Mammary epithelial cell (primary cell): ENCODE measurements at regions of chr13 and their contacts with region 1.

Region 1: DNA sequence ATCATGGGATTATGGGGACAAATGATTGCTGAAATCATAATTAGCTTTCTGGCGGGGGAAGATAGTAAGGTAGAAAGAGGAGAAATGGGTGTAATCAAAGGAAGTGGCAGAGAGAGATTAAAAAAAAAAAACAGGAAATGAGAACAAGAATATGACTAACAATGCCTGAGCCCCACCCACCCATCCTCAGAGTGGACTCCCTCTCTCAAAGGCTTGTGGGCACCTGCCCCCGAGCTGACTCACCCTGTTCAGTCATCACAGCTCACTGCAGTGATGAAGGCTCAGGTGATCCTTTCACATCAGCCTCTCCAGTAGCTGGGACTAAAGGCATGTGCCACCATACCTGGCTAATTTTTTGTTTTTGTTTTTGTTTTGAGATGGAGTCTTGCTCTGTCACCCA is 26.4 kb upstream of the TPT1 start:
- DNase-seq: peak; percentile 99
- H3K4me3 ChIP-seq: no peak overlapping the region
- H3K27ac ChIP-seq: peak overlapping the region; percentile 92
- H3K4me1 ChIP-seq: peaks cover 39% of the 10 kb centered on the region
- H3K27me3 ChIP-seq: no peaks in the 10 kb centered on the region
- CTCF ChIP-seq: no peak

Region 2: DNA sequence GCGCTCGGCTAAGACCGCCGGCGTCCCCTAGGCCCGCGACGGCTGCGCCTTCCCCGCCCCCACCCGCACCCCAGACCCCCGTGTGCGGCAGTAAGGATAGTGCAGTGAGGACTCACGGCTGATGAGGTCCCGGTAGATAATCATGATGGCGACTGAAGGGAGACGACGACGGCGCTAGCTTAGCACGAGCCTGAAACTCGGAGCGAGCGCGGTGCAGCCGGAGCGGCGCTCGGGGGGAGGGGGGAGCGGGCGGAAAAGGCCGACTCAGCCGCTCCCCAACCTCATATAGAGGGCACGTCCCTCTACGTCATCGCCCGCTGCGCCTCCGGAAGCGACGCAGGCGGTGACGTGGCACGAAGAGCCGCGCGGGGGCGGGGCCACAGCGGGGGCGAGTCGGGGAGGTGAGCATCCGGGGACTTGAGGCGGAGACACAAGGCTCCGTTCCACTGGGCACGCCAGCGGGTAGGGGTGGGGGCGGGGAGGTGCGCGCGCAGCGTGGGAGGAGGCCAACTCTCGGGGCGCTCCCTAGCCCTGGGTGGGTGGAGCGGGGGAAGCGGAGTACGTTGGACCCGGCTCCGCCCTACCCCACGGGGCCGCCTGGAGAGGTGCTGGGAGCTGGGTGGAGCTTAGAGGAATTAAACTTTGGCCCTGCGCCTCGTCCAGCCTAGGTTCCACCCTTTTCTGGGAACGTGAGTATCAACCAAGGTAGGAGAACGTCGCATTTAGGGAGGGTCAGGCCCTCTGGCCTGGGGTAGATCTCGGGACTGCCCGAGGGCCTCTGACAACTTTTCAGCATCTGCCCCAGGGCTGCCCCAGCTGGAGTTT is 26.2 kb before region 1 on chr13 and contains the start of gene TPT1:
- CTCF ChIA-PET with region 1: no interaction called
- dilution Hi-C with region 1: no loop called
- in situ Hi-C with region 1: no loop called
- intact Hi-C with region 1: loop called (anchors 1 kb)
- DNase-seq: peak; percentile 99
- H3K4me3 ChIP-seq: peak within 1 kb of the TSS; percentile 77 to 96 (median 88)
- H3K27ac ChIP-seq: peak within 1 kb of the TSS; percentile 94
- H3K4me1 ChIP-seq: peaks cover 39% of the 10 kb centered on the region
- H3K27me3 ChIP-seq: no peaks in the 10 kb centered on the region
- CTCF ChIP-seq: no peak
- total RNA-seq, gene TPT1: 1,890 to 3,324 TPM

Region 3: DNA sequence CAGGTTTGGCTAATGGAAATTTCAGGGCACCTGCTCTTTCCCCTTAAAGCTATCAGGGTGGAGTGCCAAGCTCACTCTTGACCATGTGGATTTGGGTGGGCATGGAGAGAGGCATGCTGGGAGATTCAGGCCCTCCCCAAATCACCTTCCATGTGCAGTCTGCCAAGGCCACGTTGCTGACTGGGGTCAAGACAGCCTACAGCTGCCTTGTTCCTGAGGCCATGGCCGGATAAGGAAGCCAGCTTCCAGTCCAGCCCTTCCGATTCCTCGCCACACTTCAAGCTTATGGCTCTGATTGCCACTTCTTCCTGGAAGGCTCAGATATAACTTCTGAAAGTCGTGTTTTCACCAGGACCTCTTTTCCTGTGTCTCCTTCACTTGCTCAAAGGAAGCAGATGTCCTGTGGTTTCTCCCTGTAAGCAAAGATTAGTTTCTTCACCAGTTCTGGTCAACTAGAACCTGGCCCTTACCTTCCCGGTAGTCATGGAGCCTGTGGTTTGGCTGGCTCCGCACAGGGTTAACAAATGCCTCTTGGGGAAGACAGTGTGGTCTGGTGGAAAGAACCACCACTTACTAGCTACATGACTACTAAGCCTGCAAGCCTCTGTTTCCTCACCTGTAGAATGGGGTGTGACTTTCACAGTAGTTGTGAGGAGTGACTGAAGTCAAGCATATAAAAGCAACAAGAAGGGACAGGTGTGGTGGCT is 10.2 kb before region 1 on chr13:
- CTCF ChIA-PET with region 1: no interaction called
- dilution Hi-C with region 1: no loop called
- in situ Hi-C with region 1: no loop called
- intact Hi-C with region 1: loop called (anchors 1 kb)
- DNase-seq: no peak
- H3K4me3 ChIP-seq: no peak overlapping the region
- H3K27ac ChIP-seq: no peak overlapping the region
- H3K4me1 ChIP-seq: peaks cover 8% of the 10 kb centered on the region
- H3K27me3 ChIP-seq: no peaks in the 10 kb centered on the region
- CTCF ChIP-seq: no peak

Region 4: GRCh38 chr13:45490068-45490467 is 122.7 kb after region 1 on chr13:
- CTCF ChIA-PET with region 1: no interaction called
- dilution Hi-C with region 1: no loop called
- in situ Hi-C with region 1: loop called in 1 of 2 experiments (anchors 25 kb)
- intact Hi-C with region 1: loop called (anchors 2 kb)
- DNase-seq: no peak
- H3K4me3 ChIP-seq: no peak overlapping the region
- H3K27ac ChIP-seq: no peak overlapping the region
- H3K4me1 ChIP-seq: no peaks in the 10 kb centered on the region
- H3K27me3 ChIP-seq: no peaks in the 10 kb centered on the region
- CTCF ChIP-seq: peak; percentile 41 to 50

Region 5: GRCh38 chr13:45584816-45585215 is 217.5 kb after region 1 on chr13:
- CTCF ChIA-PET with region 1: no interaction called
- dilution Hi-C with region 1: no loop called
- in situ Hi-C with region 1: no loop called
- intact Hi-C with region 1: loop called (anchors 1 kb)
- DNase-seq: peak; percentile 15
- H3K4me3 ChIP-seq: no peak overlapping the region
- H3K27ac ChIP-seq: no peak overlapping the region
- H3K4me1 ChIP-seq: no peaks in the 10 kb centered on the region
- H3K27me3 ChIP-seq: no peaks in the 10 kb centered on the region
- CTCF ChIP-seq: peak; percentile 47 to 60

Region 6: DNA sequence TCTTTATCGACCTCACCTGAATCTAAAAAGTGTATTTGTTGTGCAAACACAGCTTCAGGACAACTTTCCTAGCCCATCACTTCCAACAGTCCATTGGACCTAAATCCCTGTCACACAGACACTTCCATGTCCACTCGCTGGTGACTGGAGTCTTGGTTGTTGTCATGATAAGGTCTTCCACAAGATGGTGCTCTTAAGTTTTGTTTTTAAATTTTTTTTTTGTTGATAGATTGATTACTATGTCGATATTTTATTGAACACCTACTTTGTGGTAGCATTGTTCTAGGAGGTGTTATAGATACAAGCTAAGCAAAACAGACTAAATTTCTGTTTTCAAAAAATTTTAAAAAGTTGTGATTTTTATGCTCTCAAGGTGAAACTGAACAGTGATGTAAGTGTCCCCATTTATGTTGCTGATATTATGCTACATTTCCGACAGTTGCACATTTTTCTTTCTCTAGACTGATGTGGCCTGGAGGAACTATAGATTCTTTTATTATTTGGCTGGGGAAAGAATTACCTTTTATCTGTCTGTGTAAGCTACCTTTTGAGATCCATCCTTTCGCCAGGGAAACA is 256.2 kb after region 1 on chr13:
- CTCF ChIA-PET with region 1: interaction called, 14 read pairs
- dilution Hi-C with region 1: no loop called
- in situ Hi-C with region 1: no loop called
- intact Hi-C with region 1: no loop called
- DNase-seq: no peak
- H3K4me3 ChIP-seq: no peak overlapping the region
- H3K27ac ChIP-seq: no peak overlapping the region
- H3K4me1 ChIP-seq: no peaks in the 10 kb centered on the region
- H3K27me3 ChIP-seq: peaks cover 4% of the 10 kb centered on the region
- CTCF ChIP-seq: peak; percentile 35 to 60

Region 7: DNA sequence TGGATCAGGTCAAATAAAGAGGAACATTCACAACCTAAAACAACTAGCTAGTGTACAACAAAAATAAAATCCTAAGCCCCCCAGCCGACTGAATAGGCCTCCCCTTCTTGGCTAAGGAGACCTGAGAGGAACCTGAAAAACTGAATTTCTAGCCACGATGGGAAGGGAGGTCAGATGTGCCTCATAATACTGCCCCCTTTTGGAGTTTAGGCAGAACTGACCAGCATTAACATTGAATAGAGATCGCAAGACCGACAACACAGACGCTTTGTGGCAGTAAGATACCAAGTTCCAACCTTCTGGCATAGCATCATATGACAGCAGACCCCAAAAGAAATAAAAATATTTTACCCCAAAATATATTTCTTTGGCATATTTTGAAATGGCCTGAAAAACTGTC is 350.7 kb after region 1 on chr13:
- CTCF ChIA-PET with region 1: no interaction called
- dilution Hi-C with region 1: no loop called
- in situ Hi-C with region 1: no loop called
- intact Hi-C with region 1: loop called (anchors 5 kb)
- DNase-seq: peak; percentile 9
- H3K4me3 ChIP-seq: no peak overlapping the region
- H3K27ac ChIP-seq: no peak overlapping the region
- H3K4me1 ChIP-seq: no peaks in the 10 kb centered on the region
- H3K27me3 ChIP-seq: no peaks in the 10 kb centered on the region
- CTCF ChIP-seq: peak; percentile 69 to 79